CD4-positive, alpha-beta T cell (primary cell): ENCODE measurements at regions of chr10 and their contacts with region 1.

Region 1: GRCh38 chr10:86899670-86900276 is 57.6 kb downstream of the MMRN2 start:
- DNase-seq: peak in 10 of 14 experiments; percentile 4 to 66 (median 24)
- ATAC-seq: no peak
- H3K4me3 ChIP-seq: no peak overlapping the region
- H3K4me3 Mint-ChIP-seq: no peak overlapping the region
- H3K27ac ChIP-seq: no peak overlapping the region
- H3K27ac Mint-ChIP-seq: no peak overlapping the region
- H3K4me1 ChIP-seq: no peaks in the 10 kb centered on the region
- H3K4me1 Mint-ChIP-seq: no peaks in the 10 kb centered on the region
- H3K27me3 ChIP-seq: no peaks in the 10 kb centered on the region
- H3K27me3 Mint-ChIP-seq: no peaks in the 10 kb centered on the region
- CTCF ChIP-seq: peak; percentile 72

Region 2: GRCh38 chr10:86688398-86688921 is 211.3 kb before region 1 on chr10:
- CTCF ChIA-PET with region 1: interaction called, 3 read pairs
- POLR2A ChIA-PET with region 1: no interaction called
- intact Hi-C with region 1: loop called (anchors 1 kb)
- DNase-seq: peak; percentile 19 to 78 (median 36)
- ATAC-seq: peak; percentile 94
- H3K4me3 ChIP-seq: no peak overlapping the region
- H3K4me3 Mint-ChIP-seq: no peak overlapping the region
- H3K27ac ChIP-seq: no peak overlapping the region
- H3K27ac Mint-ChIP-seq: no peak overlapping the region
- H3K4me1 ChIP-seq: peaks cover 6% of the 10 kb centered on the region
- H3K4me1 Mint-ChIP-seq: peaks cover 5% of the 10 kb centered on the region
- H3K27me3 ChIP-seq: peaks cover 0 to 4% of the 10 kb centered on the region in 2 experiments
- H3K27me3 Mint-ChIP-seq: peaks cover 10% of the 10 kb centered on the region
- CTCF ChIP-seq: peak; percentile 81

Region 3: GRCh38 chr10:86693721-86694369 is 205.9 kb before region 1 on chr10:
- CTCF ChIA-PET with region 1: no interaction called
- POLR2A ChIA-PET with region 1: no interaction called
- intact Hi-C with region 1: loop called in 1 of 2 experiments (anchors 1 kb)
- DNase-seq: peak in 11 of 14 experiments; percentile 11 to 59 (median 27)
- ATAC-seq: no peak
- H3K4me3 ChIP-seq: no peak overlapping the region
- H3K4me3 Mint-ChIP-seq: no peak overlapping the region
- H3K27ac ChIP-seq: no peak overlapping the region
- H3K27ac Mint-ChIP-seq: no peak overlapping the region
- H3K4me1 ChIP-seq: no peaks in the 10 kb centered on the region
- H3K4me1 Mint-ChIP-seq: no peaks in the 10 kb centered on the region
- H3K27me3 ChIP-seq: no peaks in the 10 kb centered on the region
- H3K27me3 Mint-ChIP-seq: no peaks in the 10 kb centered on the region
- CTCF ChIP-seq: peak; percentile 66

Region 4: GRCh38 chr10:86710987-86711512 is 188.7 kb before region 1 on chr10:
- CTCF ChIA-PET with region 1: no interaction called
- POLR2A ChIA-PET with region 1: no interaction called
- intact Hi-C with region 1: loop called (anchors 1 to 5 kb)
- DNase-seq: peak; percentile 68 to 93 (median 82)
- ATAC-seq: peak; percentile 95
- H3K4me3 ChIP-seq: peak overlapping the region; percentile 67
- H3K4me3 Mint-ChIP-seq: peak overlapping the region; percentile 95
- H3K27ac ChIP-seq: peak overlapping the region; percentile 78 to 81
- H3K27ac Mint-ChIP-seq: peak overlapping the region; percentile 95
- H3K4me1 ChIP-seq: peaks cover 17% of the 10 kb centered on the region
- H3K4me1 Mint-ChIP-seq: peaks cover 20% of the 10 kb centered on the region
- H3K27me3 ChIP-seq: no peaks in the 10 kb centered on the region
- H3K27me3 Mint-ChIP-seq: no peaks in the 10 kb centered on the region
- CTCF ChIP-seq: peak; percentile 77